Activated CD4-positive, alpha-beta T cell treated with anti-CD3 and anti-CD28 coated beads, Interleukin-2, amount 10 ng/mL, durations not matched to agents 24 days and 14 days (primary cell): ENCODE measurements at regions of chr15 and their contacts with region 1.

Region 1: DNA sequence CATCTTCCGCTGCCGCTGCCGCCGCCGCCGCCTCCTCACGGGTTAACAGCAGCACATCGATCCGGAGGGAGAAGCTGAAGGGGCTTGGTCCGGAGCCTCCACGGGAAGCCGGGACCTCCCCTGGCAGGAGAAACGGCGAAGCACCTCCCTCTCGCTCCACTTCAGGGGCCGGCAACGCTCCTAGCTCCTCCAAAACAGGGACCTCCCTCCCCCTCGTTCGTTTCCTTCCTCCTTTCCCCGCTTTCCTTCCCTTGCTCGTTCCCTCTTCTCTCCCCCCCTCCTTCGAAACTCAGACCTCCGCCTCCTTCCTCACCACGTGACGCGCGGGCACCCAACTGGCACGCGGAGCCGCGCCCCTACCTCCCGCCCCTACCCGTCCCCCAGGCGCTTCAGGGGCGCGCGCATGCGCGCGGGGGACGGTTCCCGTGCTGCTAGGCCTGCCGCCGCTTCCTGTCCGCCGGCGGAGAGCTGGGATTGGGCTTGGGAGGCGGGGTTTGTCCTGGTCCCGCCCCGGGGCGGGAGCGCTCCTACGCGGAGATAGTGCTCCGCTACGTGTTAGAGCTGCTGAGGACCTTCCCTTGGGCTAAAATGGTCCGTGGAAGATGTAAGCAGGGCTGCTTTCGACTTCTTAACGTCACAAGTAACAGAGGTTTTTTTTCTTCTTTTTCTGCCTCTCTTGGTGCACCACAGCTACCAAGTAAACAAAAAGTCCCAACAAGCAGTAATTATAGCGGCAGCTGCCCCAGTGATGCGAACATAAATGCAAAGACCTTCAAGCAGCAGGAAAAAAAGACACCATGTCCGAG is at the start of gene ADAM10:
- DNase-seq: peak; percentile 99
- H3K4me3 Mint-ChIP-seq: peak within 1 kb of the TSS; percentile 92
- H3K27ac Mint-ChIP-seq: peak within 1 kb of the TSS; percentile 92
- H3K4me1 Mint-ChIP-seq: peaks cover 31% of the 10 kb centered on the region
- H3K27me3 Mint-ChIP-seq: no peaks in the 10 kb centered on the region
- total RNA-seq, gene ADAM10: 103 and 111 TPM in 2 replicates

Region 2: DNA sequence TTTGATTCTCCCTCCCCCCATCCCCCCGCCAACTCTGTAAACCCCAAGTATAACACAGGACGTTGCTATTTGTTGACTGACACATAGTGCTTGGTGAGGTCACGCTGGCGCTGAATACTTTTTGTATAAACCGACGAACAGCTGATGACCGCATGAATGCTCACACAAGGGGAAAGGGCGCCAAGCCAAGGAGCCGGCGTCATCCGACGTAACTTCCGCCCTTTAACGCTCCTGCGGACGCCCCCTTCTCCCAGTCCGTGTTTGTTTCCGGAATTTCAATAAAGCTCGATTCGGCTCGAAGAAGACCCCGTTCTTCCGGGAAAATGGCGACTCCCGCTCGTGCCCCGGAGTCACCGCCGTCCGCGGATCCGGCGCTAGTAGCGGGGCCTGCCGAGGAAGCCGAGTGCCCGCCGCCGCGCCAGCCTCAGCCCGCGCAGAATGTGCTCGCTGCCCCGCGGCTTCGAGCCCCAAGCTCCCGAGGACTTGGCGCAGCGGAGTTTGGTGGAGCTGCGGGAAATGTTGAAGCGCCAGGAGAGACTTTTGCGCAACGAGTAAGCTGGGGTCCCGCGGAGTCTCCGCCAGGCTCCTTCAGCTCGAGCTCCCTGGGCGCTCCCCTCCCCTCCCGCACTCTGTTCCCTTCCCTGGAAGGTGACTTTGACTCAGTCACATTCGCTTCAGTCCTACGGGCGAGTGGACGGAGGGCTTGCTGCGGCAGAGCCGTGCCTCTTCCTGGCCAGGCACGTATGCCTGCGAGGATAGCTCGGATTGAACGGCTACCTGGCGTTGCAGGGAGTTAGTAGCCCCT is 1043.1 kb before region 1 on chr15 and contains the start of gene POLR2M:
- intact Hi-C with region 1: loop called (anchors 5 kb)
- DNase-seq: peak; percentile 96
- H3K4me3 Mint-ChIP-seq: peak within 1 kb of the TSS; percentile 88
- H3K27ac Mint-ChIP-seq: peak within 1 kb of the TSS; percentile 66
- H3K4me1 Mint-ChIP-seq: peaks cover 58% of the 10 kb centered on the region
- H3K27me3 Mint-ChIP-seq: peaks cover 4% of the 10 kb centered on the region
- total RNA-seq, gene POLR2M: 54.5 and 55.4 TPM in 2 replicates

Region 3: GRCh38 chr15:58438956-58439355 is 310.8 kb before region 1 on chr15:
- intact Hi-C with region 1: loop called (anchors 5 kb)
- DNase-seq: peak; percentile 85
- H3K4me3 Mint-ChIP-seq: no peak overlapping the region
- H3K27ac Mint-ChIP-seq: no peak overlapping the region
- H3K4me1 Mint-ChIP-seq: peaks cover 33% of the 10 kb centered on the region
- H3K27me3 Mint-ChIP-seq: no peaks in the 10 kb centered on the region

Region 4: GRCh38 chr15:58546635-58547627 is 202.8 kb before region 1 on chr15:
- intact Hi-C with region 1: loop called (anchors 1 kb)
- DNase-seq: no peak
- H3K4me3 Mint-ChIP-seq: peak overlapping the region; percentile 25
- H3K27ac Mint-ChIP-seq: peak overlapping the region; percentile 97
- H3K4me1 Mint-ChIP-seq: peaks cover 60% of the 10 kb centered on the region
- H3K27me3 Mint-ChIP-seq: no peaks in the 10 kb centered on the region

Region 5: GRCh38 chr15:58704155-58704865 is 45.4 kb before region 1 on chr15:
- intact Hi-C with region 1: loop called (anchors 5 kb)
- DNase-seq: no peak
- H3K4me3 Mint-ChIP-seq: no peak overlapping the region
- H3K27ac Mint-ChIP-seq: no peak overlapping the region
- H3K4me1 Mint-ChIP-seq: peaks cover 43% of the 10 kb centered on the region
- H3K27me3 Mint-ChIP-seq: no peaks in the 10 kb centered on the region

Region 6: DNA sequence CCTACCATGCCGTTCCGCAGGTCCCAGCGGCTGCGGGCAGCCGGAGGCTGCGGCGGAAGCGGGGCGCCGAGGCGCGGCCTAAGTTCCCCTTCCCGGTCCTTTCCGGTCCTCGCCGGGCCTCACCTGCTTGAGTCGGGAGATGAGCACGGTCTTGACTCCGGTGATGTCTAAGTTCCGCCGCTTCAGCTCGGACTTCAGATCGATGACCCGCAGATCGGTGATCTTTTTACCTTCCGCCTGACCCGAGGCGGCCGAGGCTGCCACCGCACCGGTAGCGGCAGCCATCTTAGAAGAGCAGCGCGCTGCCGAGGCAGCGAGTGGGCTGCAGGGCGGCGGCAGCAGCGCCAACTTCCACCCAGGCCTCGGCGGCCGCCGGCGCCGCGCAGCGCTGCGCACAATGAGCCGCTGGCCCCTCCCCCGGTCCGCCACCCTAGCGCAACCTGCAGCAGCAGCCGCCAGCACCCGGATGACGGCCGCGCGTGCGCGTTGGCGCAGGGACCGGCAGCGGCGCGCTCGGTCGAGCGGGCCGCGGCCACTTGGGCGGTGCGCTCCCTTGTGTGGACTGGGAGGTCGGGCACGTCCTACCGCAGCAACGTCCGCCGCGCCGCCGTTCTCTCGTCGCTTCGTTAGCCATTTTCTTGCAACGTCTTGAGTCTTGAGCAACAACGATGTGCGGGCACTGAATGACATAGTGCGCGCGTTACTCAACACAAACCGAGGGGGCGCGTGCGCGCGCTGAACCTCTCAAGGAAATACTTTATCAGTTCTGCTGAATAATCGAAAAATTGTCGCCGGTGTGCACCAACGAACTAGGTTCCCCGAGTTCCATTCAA is 183.8 kb after region 1 on chr15 and contains the start of gene SLTM:
- intact Hi-C with region 1: loop called (anchors 1 kb)
- DNase-seq: peak; percentile 96
- H3K4me3 Mint-ChIP-seq: peak within 1 kb of the TSS; percentile 98
- H3K27ac Mint-ChIP-seq: peak within 1 kb of the TSS; percentile 100
- H3K4me1 Mint-ChIP-seq: peaks cover 21% of the 10 kb centered on the region
- H3K27me3 Mint-ChIP-seq: peaks cover 1% of the 10 kb centered on the region
- total RNA-seq, gene SLTM: 126 and 127 TPM in 2 replicates